K562 (cell line): ENCODE measurements at regions of chr10 and their contacts with region 1.

Region 1: DNA sequence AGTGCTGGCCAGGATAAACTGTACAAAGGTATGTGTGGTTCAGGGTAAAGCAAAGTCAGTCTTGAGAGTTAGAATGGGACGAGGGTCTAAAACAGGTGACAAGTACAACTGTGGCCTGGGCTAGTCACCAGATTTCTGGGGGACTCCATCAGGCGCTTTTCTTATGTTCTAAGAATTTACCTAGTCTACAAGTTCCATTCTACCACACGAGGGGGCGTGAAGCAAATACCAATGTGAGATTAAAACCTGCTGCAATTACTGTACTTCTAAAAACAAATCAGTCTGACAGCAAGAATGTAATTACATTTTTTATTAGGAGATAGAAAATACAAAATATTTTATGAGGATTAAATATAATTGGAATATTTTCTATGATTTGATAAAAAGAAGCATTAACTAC is 146.5 kb downstream of the ALOX5 start:
- DNase-seq: peak in 1 of 4 experiments; percentile 24
- ATAC-seq: no peak
- H3K4me3 ChIP-seq: no peak overlapping the region
- H3K27ac ChIP-seq: no peak overlapping the region
- H3K4me1 ChIP-seq: peaks cover 0 to 15% of the 10 kb centered on the region in 2 experiments; a peak in 4 of 5 replicates
- H3K27me3 ChIP-seq: no peaks in the 10 kb centered on the region
- CTCF ChIP-seq: no peak
- EP300 ChIP-seq: no peak
- POLR2A ChIP-seq: no peak
- RAD21 ChIP-seq: no peak

Region 2: DNA sequence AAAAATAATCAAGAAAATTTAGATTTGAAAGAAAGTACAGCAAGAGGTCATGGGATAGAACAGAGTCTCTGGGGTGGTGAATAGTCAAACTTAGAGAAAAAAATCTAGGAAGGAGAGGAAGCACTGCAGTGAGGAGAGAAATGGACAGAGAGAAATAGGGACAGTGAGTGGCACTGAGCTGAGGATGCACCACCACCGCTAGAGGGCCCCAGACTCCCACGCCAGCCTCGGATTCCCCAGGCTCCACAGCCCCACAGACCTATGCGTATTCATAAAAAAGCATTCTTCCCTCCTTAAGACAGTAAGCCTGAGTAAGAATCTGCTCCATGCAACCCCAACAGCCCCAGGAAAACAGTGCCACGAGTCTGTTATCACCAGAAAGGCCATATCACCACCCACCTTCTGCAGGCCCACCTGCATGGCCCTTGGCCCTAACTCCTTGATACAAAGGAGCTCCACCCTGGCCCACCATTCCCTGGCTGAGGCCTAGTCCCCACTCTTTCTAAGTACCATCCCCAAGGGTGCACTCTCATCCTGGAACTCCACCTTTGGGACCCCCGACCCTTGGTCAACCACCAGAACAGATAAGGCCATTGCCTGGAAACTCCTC is 55.4 kb before region 1 on chr10:
- CTCF ChIA-PET with region 1: no interaction called
- POLR2A ChIA-PET with region 1: no interaction called
- in situ Hi-C with region 1: no loop called
- intact Hi-C with region 1: no loop called
- DNase-seq: peak; percentile 86 to 90 (median 88)
- ATAC-seq: peak; percentile 99
- H3K4me3 ChIP-seq: no peak overlapping the region
- H3K27ac ChIP-seq: no peak overlapping the region
- H3K4me1 ChIP-seq: peaks cover 24 to 32% of the 10 kb centered on the region in 2 experiments
- H3K27me3 ChIP-seq: no peaks in the 10 kb centered on the region
- CTCF ChIP-seq: peak; percentile 95 to 99 (median 97)
- EP300 ChIP-seq: no peak
- POLR2A ChIP-seq: no peak
- RAD21 ChIP-seq: peak; percentile 98 to 99

Region 3: DNA sequence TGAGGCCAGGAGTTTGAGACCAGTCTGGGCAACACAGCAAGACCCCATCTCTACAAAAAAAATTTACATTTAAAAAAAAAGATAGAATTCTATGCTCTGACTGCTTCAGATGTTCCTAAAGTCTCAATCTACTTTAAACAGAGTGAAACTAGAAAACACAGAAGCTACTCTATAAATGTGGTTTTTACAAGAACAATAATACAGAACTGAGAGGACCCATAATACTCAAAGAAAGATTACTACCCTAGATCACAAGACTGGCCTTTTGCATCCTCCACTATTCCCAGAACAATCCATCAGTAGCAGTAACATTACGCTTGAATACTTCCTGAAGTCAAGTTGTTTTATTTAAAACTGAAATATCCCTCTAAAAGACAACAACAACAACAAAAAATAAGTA is 32.7 kb after region 1 on chr10:
- CTCF ChIA-PET with region 1: no interaction called
- POLR2A ChIA-PET with region 1: no interaction called
- in situ Hi-C with region 1: no loop called
- intact Hi-C with region 1: no loop called
- DNase-seq: no peak
- ATAC-seq: no peak
- H3K4me3 ChIP-seq: no peak overlapping the region
- H3K27ac ChIP-seq: no peak overlapping the region
- H3K4me1 ChIP-seq: peaks cover 12 to 16% of the 10 kb centered on the region in 2 experiments; a peak in 4 of 5 replicates
- H3K27me3 ChIP-seq: no peaks in the 10 kb centered on the region
- CTCF ChIP-seq: no peak
- EP300 ChIP-seq: no peak
- POLR2A ChIP-seq: no peak
- RAD21 ChIP-seq: no peak

Region 4: GRCh38 chr10:45569471-45569870 is 49.0 kb after region 1 on chr10:
- CTCF ChIA-PET with region 1: no interaction called
- POLR2A ChIA-PET with region 1: no interaction called
- in situ Hi-C with region 1: no loop called
- intact Hi-C with region 1: loop called (anchors 1 kb)
- DNase-seq: no peak
- ATAC-seq: no peak
- H3K4me3 ChIP-seq: no peak overlapping the region
- H3K27ac ChIP-seq: no peak overlapping the region
- H3K4me1 ChIP-seq: peaks cover 0 to 3% of the 10 kb centered on the region in 2 experiments; a peak in 1 of 5 replicates
- H3K27me3 ChIP-seq: no peaks in the 10 kb centered on the region
- CTCF ChIP-seq: no peak
- EP300 ChIP-seq: no peak
- POLR2A ChIP-seq: no peak
- RAD21 ChIP-seq: no peak